ENCODE measurements at regions of chr3 and their contacts with region 1.

Region 1: GRCh38 chr3:4906107-4906621 is 73.1 kb upstream of the BHLHE40 start:
- DNase-seq: no peak
- ATAC-seq: peak; percentile 73
- H3K4me3 ChIP-seq: no peak overlapping the region
- H3K27ac ChIP-seq: no peak overlapping the region
- H3K4me1 ChIP-seq: peaks cover 22% of the 10 kb centered on the region
- H3K27me3 ChIP-seq: no peaks in the 10 kb centered on the region
- CTCF ChIP-seq: no peak
- EP300 ChIP-seq: no peak
- POLR2A ChIP-seq: no peak
- RAD21 ChIP-seq: no peak

Region 2: GRCh38 chr3:4772171-4772804 is 133.9 kb before region 1 on chr3:
- CTCF ChIA-PET with region 1: no interaction called
- POLR2A ChIA-PET with region 1: no interaction called
- RAD21 ChIA-PET with region 1: no interaction called
- SMC1A ChIA-PET with region 1: no interaction called
- in situ Hi-C with region 1: no loop called
- intact Hi-C with region 1: no loop called
- DNase-seq: no peak
- ATAC-seq: no peak
- H3K4me3 ChIP-seq: no peak overlapping the region
- H3K27ac ChIP-seq: no peak overlapping the region
- H3K4me1 ChIP-seq: peaks cover 22% of the 10 kb centered on the region
- H3K27me3 ChIP-seq: no peaks in the 10 kb centered on the region
- CTCF ChIP-seq: no peak
- EP300 ChIP-seq: no peak
- POLR2A ChIP-seq: no peak
- RAD21 ChIP-seq: no peak

Region 3: GRCh38 chr3:4888913-4889846 is 17.0 kb before region 1 on chr3:
- CTCF ChIA-PET with region 1: interaction called, 5 read pairs
- POLR2A ChIA-PET with region 1: interaction called, 9 read pairs
- RAD21 ChIA-PET with region 1: interaction called, 10 read pairs
- SMC1A ChIA-PET with region 1: interaction called, 18 read pairs
- in situ Hi-C with region 1: no loop called
- intact Hi-C with region 1: no loop called
- DNase-seq: peak; percentile 71
- ATAC-seq: peak; percentile 96
- H3K4me3 ChIP-seq: no peak overlapping the region; the same call in 1 of the 2 replicates
- H3K27ac ChIP-seq: peak overlapping the region; percentile 69
- H3K4me1 ChIP-seq: peaks cover 12% of the 10 kb centered on the region
- H3K27me3 ChIP-seq: no peaks in the 10 kb centered on the region
- CTCF ChIP-seq: peak in 1 of 3 experiments; percentile 45; a peak in 3 of 6 replicates
- EP300 ChIP-seq: peak; percentile 51 to 71; a peak in 3 of 4 replicates
- POLR2A ChIP-seq: no peak
- RAD21 ChIP-seq: peak; percentile 74